ENCODE measurements at regions of chr2 and their contacts with region 1.

Region 1: GRCh38 chr2:238784671-238785527 is 63.0 kb upstream of the TWIST2 start:
- DNase-seq: peak; percentile 76
- ATAC-seq: peak; percentile 86
- H3K4me3 Mint-ChIP-seq: no peak overlapping the region
- H3K27ac Mint-ChIP-seq: no peak overlapping the region
- H3K4me1 Mint-ChIP-seq: peaks cover 16% of the 10 kb centered on the region
- H3K27me3 Mint-ChIP-seq: no peaks in the 10 kb centered on the region
- CTCF ChIP-seq: peak; percentile 78

Region 2: DNA sequence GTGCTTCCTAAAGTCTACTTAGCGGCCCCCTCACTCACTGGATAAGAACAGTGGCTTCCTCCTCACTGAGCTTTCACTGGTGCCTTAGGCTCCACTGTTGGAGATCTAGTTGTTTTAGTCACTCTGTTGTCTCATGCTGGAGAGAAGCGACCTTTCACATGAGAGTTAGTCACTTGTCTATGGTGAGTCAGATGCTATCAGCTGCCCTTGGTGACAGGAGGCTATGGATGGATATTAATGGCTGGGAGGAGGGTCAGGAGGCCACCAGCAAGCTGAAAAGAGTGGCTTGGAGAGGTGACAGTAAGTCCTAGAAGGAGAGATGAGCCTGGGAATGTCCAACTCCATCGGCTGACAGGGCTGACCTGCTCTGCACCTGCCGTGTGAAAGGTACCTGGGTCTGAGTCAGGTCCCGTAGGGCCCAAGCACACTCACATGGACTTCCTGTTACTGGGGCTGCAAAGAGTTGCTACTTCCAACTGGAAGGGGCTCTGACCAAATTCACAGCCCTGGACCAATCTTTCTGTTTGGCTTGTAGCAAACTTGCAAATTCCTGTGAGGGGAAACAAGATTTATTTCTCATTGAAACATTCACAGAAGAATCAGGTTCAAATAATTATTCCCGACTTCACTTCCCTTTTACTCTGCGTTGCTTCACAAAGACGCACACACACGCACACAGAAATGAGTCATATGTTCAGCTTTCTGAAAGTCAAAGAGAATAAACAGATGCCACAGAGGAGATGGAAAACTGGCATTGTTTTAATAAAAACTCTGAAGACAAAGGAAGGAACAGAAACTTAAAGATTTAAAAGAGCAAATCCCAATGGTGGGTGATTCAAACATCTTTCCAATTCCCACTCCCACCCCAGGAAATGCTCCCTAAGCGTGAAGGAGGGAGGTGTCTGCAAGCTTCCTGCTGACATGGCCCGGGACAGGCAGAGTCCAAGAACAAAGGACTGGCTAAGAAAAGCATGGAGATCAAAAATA is 140.5 kb before region 1 on chr2:
- CTCF ChIA-PET with region 1: no interaction called
- POLR2A ChIA-PET with region 1: no interaction called
- DNase-seq: no peak
- ATAC-seq: no peak
- H3K4me3 Mint-ChIP-seq: no peak overlapping the region
- H3K27ac Mint-ChIP-seq: no peak overlapping the region
- H3K4me1 Mint-ChIP-seq: no peaks in the 10 kb centered on the region
- H3K27me3 Mint-ChIP-seq: no peaks in the 10 kb centered on the region; the same call in 1 of the 2 replicates
- CTCF ChIP-seq: no peak

Region 3: DNA sequence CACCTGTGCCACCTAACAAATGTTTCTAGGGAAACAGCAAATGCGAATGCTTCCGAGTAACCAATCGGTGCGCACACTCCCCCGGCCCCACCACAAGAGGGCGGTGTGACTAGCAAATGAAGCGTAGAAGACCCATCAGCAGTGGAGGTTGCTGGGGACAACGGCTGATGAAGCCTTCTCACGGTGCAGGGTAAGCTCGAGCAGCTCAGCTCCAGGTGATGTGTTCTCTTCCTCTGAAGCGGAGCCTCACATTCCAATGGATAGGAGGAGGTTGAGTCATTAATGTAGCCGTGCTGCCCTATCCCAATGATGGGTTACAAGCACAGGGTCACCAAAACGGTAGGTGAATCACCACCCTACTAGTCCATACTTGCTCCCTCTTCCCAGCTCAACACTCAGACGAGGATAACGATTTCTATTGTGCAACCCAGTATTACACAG is 64.6 kb before region 1 on chr2:
- CTCF ChIA-PET with region 1: interaction called, 11 read pairs
- POLR2A ChIA-PET with region 1: no interaction called
- DNase-seq: peak; percentile 86
- ATAC-seq: peak; percentile 97
- H3K4me3 Mint-ChIP-seq: no peak overlapping the region
- H3K27ac Mint-ChIP-seq: no peak overlapping the region
- H3K4me1 Mint-ChIP-seq: peaks cover 10% of the 10 kb centered on the region
- H3K27me3 Mint-ChIP-seq: peaks cover 6% of the 10 kb centered on the region; the same call in 1 of the 2 replicates
- CTCF ChIP-seq: peak; percentile 68

Region 4: DNA sequence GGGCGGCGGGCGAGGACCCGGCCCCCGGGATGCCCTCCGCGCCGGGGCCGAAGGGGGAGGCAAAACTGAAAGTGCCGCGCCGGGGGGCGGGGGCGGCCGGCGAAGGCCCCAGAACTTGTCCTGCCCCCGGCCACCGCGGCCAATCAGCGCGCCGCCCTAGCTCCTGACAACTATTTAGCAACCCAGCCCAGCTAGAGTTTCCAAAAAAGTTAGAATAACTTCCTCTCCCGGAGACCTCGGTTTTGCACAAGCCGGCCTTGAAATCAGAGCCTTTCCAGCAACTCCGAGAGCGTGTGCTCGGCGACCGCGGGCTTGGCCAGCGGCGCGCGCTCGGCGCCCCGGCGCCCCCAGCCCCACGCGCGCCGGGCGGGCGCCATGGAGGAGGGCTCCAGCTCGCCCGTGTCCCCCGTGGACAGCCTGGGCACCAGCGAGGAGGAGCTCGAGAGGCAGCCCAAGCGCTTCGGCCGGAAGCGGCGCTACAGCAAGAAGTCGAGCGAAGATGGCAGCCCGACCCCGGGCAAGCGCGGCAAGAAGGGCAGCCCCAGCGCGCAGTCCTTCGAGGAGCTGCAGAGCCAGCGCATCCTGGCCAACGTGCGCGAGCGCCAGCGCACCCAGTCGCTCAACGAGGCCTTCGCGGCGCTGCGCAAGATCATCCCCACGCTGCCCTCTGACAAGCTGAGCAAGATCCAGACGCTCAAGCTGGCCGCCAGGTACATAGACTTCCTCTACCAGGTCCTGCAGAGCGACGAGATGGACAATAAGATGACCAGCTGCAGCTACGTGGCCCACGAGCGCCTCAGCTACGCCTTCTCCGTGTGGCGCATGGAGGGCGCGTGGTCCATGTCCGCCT is 63.2 kb after region 1 on chr2 and contains the start of gene TWIST2:
- CTCF ChIA-PET with region 1: interaction called, 18 read pairs
- POLR2A ChIA-PET with region 1: no interaction called
- DNase-seq: peak; percentile 66
- ATAC-seq: peak; percentile 51
- H3K4me3 Mint-ChIP-seq: peak within 1 kb of the TSS; percentile 67
- H3K27ac Mint-ChIP-seq: no peak within 1 kb of the TSS
- H3K4me1 Mint-ChIP-seq: peaks cover 11% of the 10 kb centered on the region
- H3K27me3 Mint-ChIP-seq: peaks cover 81% of the 10 kb centered on the region
- CTCF ChIP-seq: no peak
- total RNA-seq, gene TWIST2: 4.1 to 5.7 TPM (median 5.1 TPM) in 3 replicates

Region 5: DNA sequence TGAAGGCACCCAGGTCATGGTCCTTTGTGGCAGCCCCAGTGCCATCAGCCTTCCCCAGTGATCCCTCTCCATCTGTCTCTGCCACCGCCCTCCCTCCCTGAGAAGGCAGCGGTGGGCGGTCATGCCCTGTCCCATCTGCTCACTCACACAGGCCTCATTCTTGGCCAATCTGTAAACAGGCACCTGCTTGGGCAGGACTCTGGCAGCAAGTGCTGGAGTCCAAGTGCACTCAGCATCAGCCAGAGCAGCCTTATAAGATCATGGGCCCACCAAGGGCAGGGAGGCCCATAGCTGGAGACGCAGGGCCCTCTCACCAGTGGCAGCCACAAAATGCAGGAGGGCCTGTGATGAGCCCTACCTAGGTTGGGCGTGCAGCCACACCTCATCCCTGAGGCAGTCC is 203.9 kb after region 1 on chr2:
- CTCF ChIA-PET with region 1: no interaction called
- POLR2A ChIA-PET with region 1: no interaction called
- DNase-seq: no peak
- ATAC-seq: no peak
- H3K4me3 Mint-ChIP-seq: no peak overlapping the region
- H3K27ac Mint-ChIP-seq: no peak overlapping the region
- H3K4me1 Mint-ChIP-seq: peaks cover 6% of the 10 kb centered on the region
- H3K27me3 Mint-ChIP-seq: peaks cover under 1% of the 10 kb centered on the region; the same call in 1 of the 2 replicates
- CTCF ChIP-seq: no peak